ENCODE measurements at regions of chr2 and their contacts with region 1.

Region 1: GRCh38 chr2:173979751-173980351 is 14.7 kb upstream of the SP3 start:
- DNase-seq: no peak
- ATAC-seq: no peak
- H3K4me3 ChIP-seq: no peak overlapping the region
- H3K27ac ChIP-seq: no peak overlapping the region
- H3K4me1 ChIP-seq: no peaks in the 10 kb centered on the region
- H3K27me3 ChIP-seq: no peaks in the 10 kb centered on the region
- CTCF ChIP-seq: no peak

Region 2: DNA sequence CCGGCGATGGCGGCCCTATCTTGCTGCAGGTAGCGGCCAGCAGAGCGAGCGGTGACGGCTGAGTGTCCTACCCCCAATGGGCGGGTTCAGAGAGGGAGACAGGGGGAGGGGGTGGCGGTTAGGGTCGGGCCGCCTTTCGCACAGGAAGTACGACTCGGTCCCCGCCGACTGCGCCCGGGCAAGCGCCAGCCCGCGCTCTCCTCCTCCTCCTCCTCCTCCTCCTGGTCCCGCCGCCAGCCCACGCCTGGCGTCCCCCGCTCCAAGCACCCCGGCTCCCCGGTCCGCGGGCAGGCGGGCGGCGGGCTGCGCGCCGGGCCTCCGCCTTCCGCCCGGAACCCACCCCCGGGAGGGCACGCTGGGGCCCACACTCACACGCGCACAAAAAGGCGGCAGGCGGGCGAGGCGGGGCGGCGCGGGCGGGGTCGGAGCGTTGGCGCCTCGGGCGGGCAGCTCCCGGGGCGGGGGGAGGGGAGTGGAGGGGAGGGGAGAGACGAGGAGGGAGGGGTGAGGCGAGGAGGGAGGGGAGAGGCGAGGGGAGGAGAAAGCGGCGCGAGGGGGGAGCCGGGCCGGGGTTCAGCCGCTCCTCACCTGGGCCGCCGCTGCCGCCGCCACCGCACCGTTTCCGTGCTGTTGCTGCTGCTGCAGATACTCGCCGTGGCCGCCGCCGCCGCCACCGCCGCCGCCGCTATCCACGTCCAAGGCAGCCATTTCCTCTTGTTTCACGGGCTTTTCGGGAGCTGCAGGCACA is 15.9 kb before region 1 on chr2:
- CTCF ChIA-PET with region 1: no interaction called
- POLR2A ChIA-PET with region 1: interaction called, 11 read pairs
- in situ Hi-C with region 1: no loop called
- intact Hi-C with region 1: no loop called
- DNase-seq: no peak
- ATAC-seq: peak; percentile 83
- H3K4me3 ChIP-seq: peak overlapping the region; percentile 32 to 96
- H3K27ac ChIP-seq: no peak overlapping the region
- H3K4me1 ChIP-seq: peaks cover 23% of the 10 kb centered on the region
- H3K27me3 ChIP-seq: no peaks in the 10 kb centered on the region
- CTCF ChIP-seq: no peak

Region 3: DNA sequence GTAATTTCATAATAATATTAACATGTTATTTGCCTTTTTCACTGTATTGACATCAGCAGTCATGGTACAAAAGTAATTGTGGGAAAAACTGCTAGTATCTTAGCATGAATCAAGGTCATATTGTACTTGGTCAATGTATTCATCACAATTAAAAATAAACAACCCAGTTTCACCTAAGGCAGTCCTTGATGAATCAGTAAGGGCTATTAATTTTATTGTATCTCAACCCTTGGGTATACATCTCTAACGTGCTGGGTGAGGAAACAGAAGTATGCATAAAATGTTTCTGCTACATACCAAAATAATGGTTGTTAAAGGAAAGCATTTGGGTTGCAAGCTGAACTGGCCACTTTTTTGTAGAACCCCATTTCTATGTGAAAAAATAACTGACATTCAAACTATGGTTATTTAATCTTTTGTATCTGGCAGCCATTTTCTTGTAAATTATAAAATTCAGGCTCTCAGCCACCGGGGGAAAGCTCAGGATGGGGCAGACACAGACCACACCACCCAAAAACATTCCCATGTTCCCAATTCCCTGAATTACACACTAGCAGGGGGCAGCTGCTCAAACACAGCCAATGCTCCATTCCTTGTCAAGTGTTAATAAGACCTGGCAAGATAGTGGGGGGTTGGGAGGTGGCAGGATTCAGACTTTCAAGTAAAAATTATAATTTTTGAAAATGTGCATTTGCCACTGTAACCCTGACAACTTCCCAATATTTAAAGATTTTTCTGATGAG is 219.1 kb after region 1 on chr2:
- CTCF ChIA-PET with region 1: no interaction called
- POLR2A ChIA-PET with region 1: no interaction called
- in situ Hi-C with region 1: no loop called
- intact Hi-C with region 1: no loop called
- DNase-seq: no peak
- ATAC-seq: no peak
- H3K4me3 ChIP-seq: no peak overlapping the region
- H3K27ac ChIP-seq: no peak overlapping the region
- H3K4me1 ChIP-seq: no peaks in the 10 kb centered on the region; the same call in none of the 2 replicates
- H3K27me3 ChIP-seq: no peaks in the 10 kb centered on the region
- CTCF ChIP-seq: no peak